ENCODE measurements at regions of chr16 and their contacts with region 1.

Region 1: GRCh38 chr16:19142939-19143598 is 25.0 kb upstream of the SYT17 start:
- DNase-seq: no peak
- ATAC-seq: no peak
- H3K4me3 ChIP-seq: no peak overlapping the region
- H3K27ac ChIP-seq: no peak overlapping the region
- H3K4me1 ChIP-seq: peaks cover 0 to 29% (median 14%) of the 10 kb centered on the region in 9 donors
- H3K27me3 ChIP-seq: peaks cover 0 to 6% (median 0%) of the 10 kb centered on the region in 7 donors
- CTCF ChIP-seq: no peak

Region 2: GRCh38 chr16:19203374-19204031 is 60.4 kb after region 1 on chr16:
- intact Hi-C with region 1: no loop called
- DNase-seq: no peak
- ATAC-seq: no peak
- H3K4me3 ChIP-seq: no peak overlapping the region
- H3K27ac ChIP-seq: no peak overlapping the region
- H3K4me1 ChIP-seq: no peaks in the 10 kb centered on the region
- H3K27me3 ChIP-seq: no peaks in the 10 kb centered on the region
- CTCF ChIP-seq: no peak

Region 3: DNA sequence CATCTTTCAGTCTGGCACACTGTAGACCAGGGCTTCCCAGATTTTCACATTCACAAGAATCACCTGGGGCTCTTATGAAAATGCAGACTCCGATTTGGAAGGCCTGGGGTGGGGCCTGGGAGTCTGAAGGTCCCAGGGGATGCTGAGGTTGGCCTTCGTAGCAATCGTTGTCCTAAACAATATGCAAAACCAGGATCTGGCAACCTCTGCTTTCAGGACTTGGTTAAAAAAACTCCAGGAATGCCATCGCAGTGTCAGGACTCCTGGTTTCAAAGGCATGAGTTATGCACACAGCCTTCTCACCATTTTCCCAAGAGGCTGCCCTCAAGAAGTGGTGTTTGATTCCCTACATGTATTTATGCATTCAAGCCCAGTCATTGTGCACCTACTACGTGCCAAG is 149.1 kb after region 1 on chr16:
- intact Hi-C with region 1: loop called in 1 of 10 experiments (anchors 1 kb)
- DNase-seq: no peak
- ATAC-seq: no peak
- H3K4me3 ChIP-seq: no peak overlapping the region
- H3K27ac ChIP-seq: no peak overlapping the region
- H3K4me1 ChIP-seq: peaks cover 0 to 16% (median 0%) of the 10 kb centered on the region in 9 donors
- H3K27me3 ChIP-seq: peaks cover 0 to 17% (median 5%) of the 10 kb centered on the region in 7 donors
- CTCF ChIP-seq: no peak

Measured in heart right ventricle (tissue), 16 donors.